CD8-positive, alpha-beta T cell (primary cell): ENCODE measurements at regions of chr19 and their contacts with region 1.

Region 1: GRCh38 chr19:35247526-35248306 is 1.1 kb upstream of the LSR start:
- DNase-seq: peak in 8 of 9 experiments; percentile 41 to 82 (median 65)
- ATAC-seq: peak; percentile 33
- H3K4me3 ChIP-seq: peak overlapping the region; percentile 65 to 96
- H3K4me3 Mint-ChIP-seq: peak overlapping the region; percentile 97
- H3K27ac ChIP-seq: peak overlapping the region; percentile 83 to 84
- H3K27ac Mint-ChIP-seq: peak overlapping the region; percentile 98
- H3K4me1 ChIP-seq: peaks cover 19% of the 10 kb centered on the region
- H3K4me1 Mint-ChIP-seq: peaks cover 39% of the 10 kb centered on the region
- H3K27me3 ChIP-seq: peaks cover 0 to 9% of the 10 kb centered on the region in 2 experiments
- H3K27me3 Mint-ChIP-seq: no peaks in the 10 kb centered on the region
- CTCF ChIP-seq: peak; percentile 43

Region 2: GRCh38 chr19:35063940-35064818 is 183.5 kb before region 1 on chr19:
- CTCF ChIA-PET with region 1: no interaction called
- POLR2A ChIA-PET with region 1: no interaction called
- intact Hi-C with region 1: no loop called
- DNase-seq: no peak
- ATAC-seq: no peak
- H3K4me3 ChIP-seq: no peak overlapping the region
- H3K4me3 Mint-ChIP-seq: no peak overlapping the region
- H3K27ac ChIP-seq: no peak overlapping the region
- H3K27ac Mint-ChIP-seq: no peak overlapping the region
- H3K4me1 ChIP-seq: peaks cover 4% of the 10 kb centered on the region
- H3K4me1 Mint-ChIP-seq: peaks cover 4% of the 10 kb centered on the region
- H3K27me3 ChIP-seq: no peaks in the 10 kb centered on the region
- H3K27me3 Mint-ChIP-seq: no peaks in the 10 kb centered on the region
- CTCF ChIP-seq: no peak

Region 3: DNA sequence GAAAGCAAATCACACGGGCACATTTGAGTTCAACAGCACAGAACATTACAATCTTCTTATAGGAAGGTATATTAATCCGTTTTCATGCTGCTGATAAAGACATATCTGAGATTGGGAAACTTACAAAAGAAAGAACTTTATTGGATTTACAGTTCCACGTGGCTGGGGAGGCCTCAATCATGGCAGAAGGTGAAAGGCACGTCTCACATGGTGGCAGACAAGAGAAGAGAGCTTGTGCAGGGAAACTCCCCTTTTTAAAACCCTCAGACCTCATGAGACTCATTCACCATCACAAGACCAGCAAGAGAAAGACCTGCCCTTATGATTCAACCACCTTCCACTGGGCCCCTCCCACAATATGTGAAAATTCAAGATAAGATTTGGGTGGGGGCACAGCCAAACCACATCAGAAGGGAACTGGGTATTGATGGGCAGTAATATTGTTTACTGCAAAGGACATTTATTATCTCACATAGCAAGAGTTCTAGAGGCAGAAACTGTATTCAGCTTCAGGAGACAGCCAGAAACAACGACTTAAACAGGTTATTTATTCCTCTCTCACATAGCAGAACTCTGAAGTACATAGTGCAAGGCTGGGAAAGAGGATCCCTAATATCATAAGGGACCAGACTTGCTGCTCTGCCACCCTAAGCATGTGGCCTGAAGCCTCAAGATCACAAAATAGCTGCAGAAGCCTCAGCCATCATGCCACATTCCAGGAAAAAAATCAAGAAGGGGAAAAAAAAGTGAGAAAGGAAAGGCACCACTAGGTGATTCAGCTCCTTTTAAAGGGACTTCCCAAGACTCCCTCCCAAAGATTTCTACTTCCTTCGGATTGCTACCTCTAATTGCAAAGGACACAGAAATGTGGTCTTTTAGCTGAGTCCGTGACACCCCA is 70.1 kb before region 1 on chr19:
- CTCF ChIA-PET with region 1: no interaction called
- POLR2A ChIA-PET with region 1: no interaction called
- intact Hi-C with region 1: no loop called
- DNase-seq: peak in 1 of 9 experiments; percentile 31
- ATAC-seq: no peak
- H3K4me3 ChIP-seq: no peak overlapping the region
- H3K4me3 Mint-ChIP-seq: no peak overlapping the region
- H3K27ac ChIP-seq: no peak overlapping the region
- H3K27ac Mint-ChIP-seq: no peak overlapping the region
- H3K4me1 ChIP-seq: peaks cover 35% of the 10 kb centered on the region
- H3K4me1 Mint-ChIP-seq: peaks cover 27% of the 10 kb centered on the region
- H3K27me3 ChIP-seq: no peaks in the 10 kb centered on the region
- H3K27me3 Mint-ChIP-seq: no peaks in the 10 kb centered on the region
- CTCF ChIP-seq: no peak

Region 4: GRCh38 chr19:35195830-35196229 is 51.9 kb before region 1 on chr19:
- CTCF ChIA-PET with region 1: no interaction called
- POLR2A ChIA-PET with region 1: no interaction called
- intact Hi-C with region 1: loop called in 1 of 2 experiments (anchors 10 kb)
- DNase-seq: no peak
- ATAC-seq: no peak
- H3K4me3 ChIP-seq: no peak overlapping the region
- H3K4me3 Mint-ChIP-seq: no peak overlapping the region
- H3K27ac ChIP-seq: no peak overlapping the region
- H3K27ac Mint-ChIP-seq: no peak overlapping the region
- H3K4me1 ChIP-seq: peaks cover 4% of the 10 kb centered on the region
- H3K4me1 Mint-ChIP-seq: peaks cover 23% of the 10 kb centered on the region
- H3K27me3 ChIP-seq: no peaks in the 10 kb centered on the region
- H3K27me3 Mint-ChIP-seq: no peaks in the 10 kb centered on the region
- CTCF ChIP-seq: no peak

Region 5: GRCh38 chr19:35213663-35214632 is 33.8 kb before region 1 on chr19:
- CTCF ChIA-PET with region 1: interaction called, 3 read pairs
- POLR2A ChIA-PET with region 1: interaction called, 9 read pairs
- intact Hi-C with region 1: loop called (anchors 1 to 2 kb)
- DNase-seq: peak; percentile 60 to 97 (median 80)
- ATAC-seq: peak; percentile 34
- H3K4me3 ChIP-seq: no peak overlapping the region
- H3K4me3 Mint-ChIP-seq: peak overlapping the region; percentile 65
- H3K27ac ChIP-seq: peak overlapping the region; percentile 96 to 97
- H3K27ac Mint-ChIP-seq: peak overlapping the region; percentile 100
- H3K4me1 ChIP-seq: peaks cover 56% of the 10 kb centered on the region
- H3K4me1 Mint-ChIP-seq: peaks cover 64% of the 10 kb centered on the region
- H3K27me3 ChIP-seq: no peaks in the 10 kb centered on the region
- H3K27me3 Mint-ChIP-seq: no peaks in the 10 kb centered on the region
- CTCF ChIP-seq: no peak

Region 6: GRCh38 chr19:35269421-35270117 is 21.9 kb after region 1 on chr19:
- CTCF ChIA-PET with region 1: interaction called, 7 read pairs
- POLR2A ChIA-PET with region 1: interaction called, 5 read pairs
- intact Hi-C with region 1: loop called (anchors 1 kb)
- DNase-seq: peak; percentile 57 to 88 (median 78)
- ATAC-seq: peak; percentile 47
- H3K4me3 ChIP-seq: peak overlapping the region in 1 of 2 experiments; percentile 62
- H3K4me3 Mint-ChIP-seq: peak overlapping the region; percentile 75
- H3K27ac ChIP-seq: no peak overlapping the region
- H3K27ac Mint-ChIP-seq: peak overlapping the region; percentile 80
- H3K4me1 ChIP-seq: peaks cover 25% of the 10 kb centered on the region
- H3K4me1 Mint-ChIP-seq: peaks cover 45% of the 10 kb centered on the region
- H3K27me3 ChIP-seq: no peaks in the 10 kb centered on the region
- H3K27me3 Mint-ChIP-seq: no peaks in the 10 kb centered on the region
- CTCF ChIP-seq: peak; percentile 64

Region 7: DNA sequence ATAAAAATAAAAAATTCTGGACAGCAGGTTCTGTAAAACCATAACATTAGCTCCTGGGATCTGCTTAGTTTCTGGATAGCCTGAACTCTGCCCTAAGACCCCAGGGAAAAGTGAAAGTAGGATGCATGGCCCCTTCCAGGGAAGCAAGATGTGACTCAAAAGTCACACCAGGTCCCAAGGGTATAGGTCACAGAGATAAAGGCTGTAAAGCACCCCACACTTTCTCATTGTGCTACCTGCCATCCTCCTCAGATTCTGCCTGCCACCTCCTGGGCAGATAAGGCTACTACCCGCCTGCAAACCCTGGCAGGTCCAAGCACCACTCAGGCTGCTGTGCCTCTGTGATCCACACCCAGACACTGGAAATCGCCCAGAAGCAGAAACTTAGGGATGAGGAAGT is 220.9 kb after region 1 on chr19:
- CTCF ChIA-PET with region 1: no interaction called
- POLR2A ChIA-PET with region 1: no interaction called
- intact Hi-C with region 1: loop called (anchors 1 to 2 kb)
- DNase-seq: peak; percentile 40 to 83 (median 68)
- ATAC-seq: peak; percentile 100
- H3K4me3 ChIP-seq: no peak overlapping the region
- H3K4me3 Mint-ChIP-seq: no peak overlapping the region
- H3K27ac ChIP-seq: no peak overlapping the region
- H3K27ac Mint-ChIP-seq: no peak overlapping the region
- H3K4me1 ChIP-seq: peaks cover 3% of the 10 kb centered on the region
- H3K4me1 Mint-ChIP-seq: peaks cover 8% of the 10 kb centered on the region
- H3K27me3 ChIP-seq: no peaks in the 10 kb centered on the region
- H3K27me3 Mint-ChIP-seq: no peaks in the 10 kb centered on the region
- CTCF ChIP-seq: peak; percentile 68